Activated CD8-positive, alpha-beta T cell treated with anti-CD3 and anti-CD28 coated beads, Interleukin-2, amount 10 ng/mL, durations not matched to agents 7 days and 5 days (primary cell): ENCODE measurements at regions of chr14 and their contacts with region 1.

Region 1: GRCh38 chr14:106013879-106014376 is 487.5 kb downstream of the TMEM121 start:
- DNase-seq: no peak
- ATAC-seq: peak; percentile 70
- H3K4me3 Mint-ChIP-seq: no peak overlapping the region
- H3K27ac Mint-ChIP-seq: no peak overlapping the region
- H3K4me1 Mint-ChIP-seq: peaks cover 37% of the 10 kb centered on the region
- H3K27me3 Mint-ChIP-seq: peaks cover 8% of the 10 kb centered on the region

Region 2: GRCh38 chr14:105962532-105962931 is 51.4 kb before region 1 on chr14:
- CTCF ChIA-PET with region 1: no interaction called
- POLR2A ChIA-PET with region 1: no interaction called
- DNase-seq: no peak
- ATAC-seq: no peak
- H3K4me3 Mint-ChIP-seq: no peak overlapping the region
- H3K27ac Mint-ChIP-seq: no peak overlapping the region
- H3K4me1 Mint-ChIP-seq: no peaks in the 10 kb centered on the region
- H3K27me3 Mint-ChIP-seq: peaks cover 37% of the 10 kb centered on the region

Region 3: GRCh38 chr14:105999361-106000028 is 14.4 kb before region 1 on chr14:
- CTCF ChIA-PET with region 1: interaction called, 23 read pairs
- POLR2A ChIA-PET with region 1: no interaction called
- DNase-seq: peak; percentile 92
- ATAC-seq: peak; percentile 83
- H3K4me3 Mint-ChIP-seq: peak overlapping the region; percentile 31
- H3K27ac Mint-ChIP-seq: peak overlapping the region; percentile 89
- H3K4me1 Mint-ChIP-seq: peaks cover 62% of the 10 kb centered on the region
- H3K27me3 Mint-ChIP-seq: no peaks in the 10 kb centered on the region

Region 4: DNA sequence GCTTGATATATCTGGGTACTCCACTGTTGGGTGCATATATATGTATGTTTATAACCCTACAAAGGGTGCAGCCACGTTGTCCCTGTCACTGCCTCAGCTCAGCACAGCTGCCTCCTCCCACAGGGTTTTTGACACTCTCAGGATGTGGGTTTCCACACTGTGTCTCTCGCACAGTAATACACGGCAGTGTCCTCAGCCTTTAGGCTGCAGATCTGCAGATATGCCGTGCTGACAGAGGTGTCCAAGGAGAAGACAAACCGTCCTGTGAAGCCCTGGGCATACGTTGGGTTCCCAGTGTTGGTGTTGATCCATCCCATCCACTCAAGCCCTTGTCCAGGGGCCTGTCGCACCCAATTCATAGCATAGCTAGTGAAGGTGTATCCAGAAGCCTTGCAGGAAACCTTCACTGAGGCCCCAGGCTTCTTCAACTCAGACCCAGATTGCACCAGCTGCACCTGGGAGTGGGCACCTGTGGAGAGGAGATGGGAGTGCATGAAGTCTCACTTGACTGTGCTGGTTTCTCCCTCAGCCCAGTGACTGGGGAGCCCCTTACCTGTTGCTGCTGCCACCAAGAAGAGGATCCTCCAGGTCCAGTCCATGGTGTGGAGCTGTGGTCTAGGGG is 11.2 kb after region 1 on chr14:
- CTCF ChIA-PET with region 1: interaction called, 17 read pairs
- POLR2A ChIA-PET with region 1: no interaction called
- DNase-seq: peak; percentile 69
- ATAC-seq: peak; percentile 94
- H3K4me3 Mint-ChIP-seq: no peak overlapping the region
- H3K27ac Mint-ChIP-seq: peak overlapping the region; percentile 51
- H3K4me1 Mint-ChIP-seq: peaks cover 25% of the 10 kb centered on the region
- H3K27me3 Mint-ChIP-seq: peaks cover 15% of the 10 kb centered on the region

Region 5: DNA sequence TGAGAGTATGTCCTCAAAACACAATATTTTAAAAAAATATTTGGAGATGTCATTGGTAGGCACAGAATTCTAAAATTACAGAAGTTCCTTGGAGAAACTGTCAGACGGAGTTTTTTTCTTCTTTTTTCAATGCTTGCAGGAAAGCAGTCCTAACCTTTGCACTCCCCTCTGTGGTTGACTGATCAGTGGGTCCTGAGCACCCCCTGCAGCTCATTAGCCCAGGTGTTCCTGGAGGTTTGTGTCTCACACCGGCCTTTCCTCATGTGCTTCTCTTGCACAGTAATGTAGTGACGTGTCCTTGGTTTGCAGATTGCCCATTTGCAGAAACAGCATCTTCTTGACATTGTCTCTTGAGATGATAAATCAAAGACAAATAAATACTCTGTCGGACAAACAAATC is 25.5 kb after region 1 on chr14:
- CTCF ChIA-PET with region 1: interaction called, 24 read pairs
- POLR2A ChIA-PET with region 1: no interaction called
- DNase-seq: peak; percentile 78
- ATAC-seq: peak; percentile 85
- H3K4me3 Mint-ChIP-seq: no peak overlapping the region
- H3K27ac Mint-ChIP-seq: no peak overlapping the region
- H3K4me1 Mint-ChIP-seq: peaks cover 7% of the 10 kb centered on the region
- H3K27me3 Mint-ChIP-seq: peaks cover 22% of the 10 kb centered on the region

Region 6: DNA sequence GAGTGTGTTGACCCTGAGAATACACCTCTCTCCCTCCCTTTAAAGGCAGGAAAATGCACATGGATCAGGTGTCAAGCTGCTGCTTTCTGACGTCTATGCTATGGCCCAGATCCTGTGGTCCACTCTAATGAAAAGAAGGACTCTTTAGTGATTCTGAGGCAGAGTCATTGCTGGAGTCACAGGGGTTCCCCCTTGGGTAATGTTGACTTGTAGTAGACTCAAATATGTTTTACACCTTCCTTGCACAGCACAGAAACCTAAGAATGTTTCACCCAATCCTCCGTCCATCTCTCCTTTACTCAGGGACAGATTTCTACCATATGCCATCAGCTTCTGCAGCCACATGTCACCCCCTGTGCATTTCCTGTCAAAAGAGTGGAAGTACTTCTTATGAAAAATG is 37.9 kb after region 1 on chr14:
- CTCF ChIA-PET with region 1: no interaction called
- POLR2A ChIA-PET with region 1: no interaction called
- DNase-seq: no peak
- ATAC-seq: no peak
- H3K4me3 Mint-ChIP-seq: no peak overlapping the region
- H3K27ac Mint-ChIP-seq: no peak overlapping the region
- H3K4me1 Mint-ChIP-seq: peaks cover 2% of the 10 kb centered on the region
- H3K27me3 Mint-ChIP-seq: peaks cover 21% of the 10 kb centered on the region